CD4-positive, alpha-beta memory T cell (primary cell): ENCODE measurements at regions of chr6 and their contacts with region 1.

Region 1: GRCh38 chr6:99330159-99330558 is 19.3 kb downstream of the FAXC start:
- DNase-seq: peak; percentile 31 to 45 (median 44)
- H3K4me3 ChIP-seq: no peak overlapping the region
- H3K4me3 Mint-ChIP-seq: peak overlapping the region in 1 of 8 donors; percentile 45
- H3K27ac ChIP-seq: no peak overlapping the region
- H3K27ac Mint-ChIP-seq: no peak overlapping the region
- H3K4me1 ChIP-seq: no peaks in the 10 kb centered on the region
- H3K4me1 Mint-ChIP-seq: peaks cover 2 to 3% (median 3%) of the 10 kb centered on the region in 4 donors
- H3K27me3 ChIP-seq: no peaks in the 10 kb centered on the region
- H3K27me3 Mint-ChIP-seq: peaks cover 2 to 8% of the 10 kb centered on the region in 2 donors

Region 2: DNA sequence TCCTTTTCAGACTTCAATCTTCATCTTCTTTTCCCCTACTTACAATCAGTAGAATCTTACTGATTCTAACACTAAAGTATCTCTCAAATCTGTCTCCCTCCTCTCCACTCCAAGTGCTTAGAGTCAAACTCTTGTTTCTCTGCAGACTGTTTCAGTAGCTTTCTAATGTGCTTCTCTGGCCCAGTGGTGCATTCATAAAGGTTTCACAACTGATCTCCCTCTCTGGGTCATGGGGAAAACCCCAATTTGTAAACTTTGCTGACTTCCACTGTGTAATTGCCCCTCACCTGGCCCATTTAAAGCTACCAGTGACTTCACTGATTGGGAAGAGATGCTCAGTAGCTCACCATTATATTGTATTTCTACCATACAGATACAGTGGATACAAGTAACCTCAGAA is 164.3 kb before region 1 on chr6:
- CTCF ChIA-PET with region 1: no interaction called
- POLR2A ChIA-PET with region 1: no interaction called
- intact Hi-C with region 1: no loop called
- DNase-seq: no peak
- H3K4me3 ChIP-seq: no peak overlapping the region
- H3K4me3 Mint-ChIP-seq: no peak overlapping the region
- H3K27ac ChIP-seq: no peak overlapping the region
- H3K27ac Mint-ChIP-seq: no peak overlapping the region
- H3K4me1 ChIP-seq: no peaks in the 10 kb centered on the region
- H3K4me1 Mint-ChIP-seq: no peaks in the 10 kb centered on the region
- H3K27me3 ChIP-seq: no peaks in the 10 kb centered on the region
- H3K27me3 Mint-ChIP-seq: peaks cover 5 to 10% of the 10 kb centered on the region in 2 donors

Region 3: GRCh38 chr6:99309557-99309956 is 20.6 kb before region 1 on chr6:
- CTCF ChIA-PET with region 1: interaction called, 25 read pairs
- POLR2A ChIA-PET with region 1: no interaction called
- intact Hi-C with region 1: no loop called
- DNase-seq: no peak
- H3K4me3 ChIP-seq: no peak overlapping the region
- H3K4me3 Mint-ChIP-seq: no peak overlapping the region
- H3K27ac ChIP-seq: no peak overlapping the region
- H3K27ac Mint-ChIP-seq: no peak overlapping the region
- H3K4me1 ChIP-seq: no peaks in the 10 kb centered on the region
- H3K4me1 Mint-ChIP-seq: no peaks in the 10 kb centered on the region
- H3K27me3 ChIP-seq: no peaks in the 10 kb centered on the region
- H3K27me3 Mint-ChIP-seq: peaks cover 8 to 10% of the 10 kb centered on the region in 2 donors

Region 4: GRCh38 chr6:99318542-99318941 is 11.6 kb before region 1 on chr6:
- CTCF ChIA-PET with region 1: interaction called, 38 read pairs
- POLR2A ChIA-PET with region 1: no interaction called
- intact Hi-C with region 1: no loop called
- DNase-seq: no peak
- H3K4me3 ChIP-seq: no peak overlapping the region
- H3K4me3 Mint-ChIP-seq: no peak overlapping the region
- H3K27ac ChIP-seq: no peak overlapping the region
- H3K27ac Mint-ChIP-seq: no peak overlapping the region
- H3K4me1 ChIP-seq: no peaks in the 10 kb centered on the region
- H3K4me1 Mint-ChIP-seq: no peaks in the 10 kb centered on the region
- H3K27me3 ChIP-seq: no peaks in the 10 kb centered on the region
- H3K27me3 Mint-ChIP-seq: peaks cover 22 to 23% of the 10 kb centered on the region in 2 donors

Region 5: DNA sequence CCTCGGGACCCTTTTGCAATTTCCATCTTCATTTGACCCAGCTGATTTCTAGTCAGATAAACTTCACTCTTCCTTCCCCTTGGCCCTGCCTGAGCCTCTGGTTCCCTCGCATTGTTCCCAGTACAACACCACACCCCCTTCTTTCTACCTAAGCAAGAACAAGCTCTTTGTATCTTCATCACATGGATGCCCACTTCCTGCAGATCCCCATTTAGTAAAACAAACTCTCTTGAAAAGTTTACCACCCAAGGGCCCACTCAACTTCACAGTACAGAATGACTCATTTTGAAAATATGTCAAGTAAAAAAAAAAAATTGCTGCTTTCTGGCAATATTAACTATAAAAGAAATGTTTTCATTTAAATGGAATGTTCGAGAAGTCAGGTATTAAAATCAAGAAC is 14.1 kb after region 1 on chr6:
- CTCF ChIA-PET with region 1: interaction called, 53 read pairs
- POLR2A ChIA-PET with region 1: no interaction called
- intact Hi-C with region 1: no loop called
- DNase-seq: no peak
- H3K4me3 ChIP-seq: no peak overlapping the region
- H3K4me3 Mint-ChIP-seq: no peak overlapping the region
- H3K27ac ChIP-seq: no peak overlapping the region
- H3K27ac Mint-ChIP-seq: no peak overlapping the region
- H3K4me1 ChIP-seq: no peaks in the 10 kb centered on the region
- H3K4me1 Mint-ChIP-seq: peaks cover 0 to 1% (median 0%) of the 10 kb centered on the region in 4 donors
- H3K27me3 ChIP-seq: peaks cover 4% of the 10 kb centered on the region
- H3K27me3 Mint-ChIP-seq: peaks cover 24 to 33% of the 10 kb centered on the region in 2 donors

Region 6: GRCh38 chr6:99353126-99353525 is 23.0 kb after region 1 on chr6:
- CTCF ChIA-PET with region 1: interaction called, 53 read pairs
- POLR2A ChIA-PET with region 1: no interaction called
- intact Hi-C with region 1: no loop called
- DNase-seq: no peak
- H3K4me3 ChIP-seq: no peak overlapping the region
- H3K4me3 Mint-ChIP-seq: no peak overlapping the region
- H3K27ac ChIP-seq: no peak overlapping the region
- H3K27ac Mint-ChIP-seq: no peak overlapping the region
- H3K4me1 ChIP-seq: no peaks in the 10 kb centered on the region
- H3K4me1 Mint-ChIP-seq: peaks cover 0 to 5% (median under 1%) of the 10 kb centered on the region in 4 donors
- H3K27me3 ChIP-seq: peaks cover 16% of the 10 kb centered on the region
- H3K27me3 Mint-ChIP-seq: peaks cover 41 to 51% of the 10 kb centered on the region in 2 donors

Region 7: GRCh38 chr6:99425647-99426453 is 95.7 kb after region 1 on chr6:
- CTCF ChIA-PET with region 1: interaction called, 20 read pairs
- POLR2A ChIA-PET with region 1: interaction called, 3 read pairs
- intact Hi-C with region 1: loop called (anchors 1 kb)
- DNase-seq: peak in 2 of 5 donors; percentile 59 to 70
- H3K4me3 ChIP-seq: peak overlapping the region; percentile 95 to 98
- H3K4me3 Mint-ChIP-seq: peak overlapping the region; percentile 97 to 100 (median 98)
- H3K27ac ChIP-seq: peak overlapping the region; percentile 96
- H3K27ac Mint-ChIP-seq: peak overlapping the region; percentile 97 to 100 (median 99)
- H3K4me1 ChIP-seq: peaks cover 56% of the 10 kb centered on the region
- H3K4me1 Mint-ChIP-seq: peaks cover 43 to 67% (median 53%) of the 10 kb centered on the region in 4 donors
- H3K27me3 ChIP-seq: no peaks in the 10 kb centered on the region
- H3K27me3 Mint-ChIP-seq: no peaks in the 10 kb centered on the region

Region 8: DNA sequence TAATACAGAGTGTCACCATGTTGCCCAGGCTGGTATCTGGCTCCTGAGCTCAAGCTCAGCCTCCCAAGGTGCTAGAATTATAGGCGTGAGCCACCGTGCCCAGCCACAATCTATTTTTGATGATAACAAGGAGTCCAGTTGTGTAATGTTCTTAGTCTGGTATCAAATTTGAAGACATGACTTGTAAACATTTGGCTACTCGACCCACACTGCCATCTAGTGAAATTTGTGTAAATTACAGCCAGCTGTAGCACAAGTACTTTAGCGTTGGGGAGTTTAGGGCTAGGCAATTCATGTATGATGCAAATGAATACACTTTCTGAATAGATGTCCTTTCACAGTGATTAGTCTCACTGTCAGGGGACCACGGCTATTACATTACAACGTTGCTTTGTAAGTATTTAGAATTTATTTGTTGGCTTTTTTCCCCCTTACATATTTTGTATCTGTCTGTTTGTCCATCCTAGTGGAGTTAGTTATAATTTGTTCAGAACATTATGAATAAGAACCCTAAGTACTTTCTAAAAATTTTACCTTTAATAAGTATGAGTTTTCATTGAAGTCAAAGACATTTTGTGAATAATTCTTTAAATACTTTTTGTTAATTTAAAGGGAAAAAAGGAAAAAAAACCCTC is 416.2 kb after region 1 on chr6:
- CTCF ChIA-PET with region 1: interaction called, 5 read pairs
- POLR2A ChIA-PET with region 1: no interaction called
- intact Hi-C with region 1: loop called (anchors 2 kb)
- DNase-seq: peak; percentile 57 to 64 (median 62)
- H3K4me3 ChIP-seq: no peak overlapping the region
- H3K4me3 Mint-ChIP-seq: no peak overlapping the region
- H3K27ac ChIP-seq: no peak overlapping the region
- H3K27ac Mint-ChIP-seq: no peak overlapping the region
- H3K4me1 ChIP-seq: no peaks in the 10 kb centered on the region
- H3K4me1 Mint-ChIP-seq: no peaks in the 10 kb centered on the region
- H3K27me3 ChIP-seq: peaks cover 3% of the 10 kb centered on the region
- H3K27me3 Mint-ChIP-seq: peaks cover 5 to 20% of the 10 kb centered on the region in 2 donors